Activated CD4-positive, alpha-beta memory T cell treated with anti-CD3 and anti-CD28 coated beads, Interleukin-2, amount 10 ng/mL, durations not matched to agents 7 days and 5 days (primary cell): ENCODE measurements at regions of chr6 and their contacts with region 1.

Region 1: DNA sequence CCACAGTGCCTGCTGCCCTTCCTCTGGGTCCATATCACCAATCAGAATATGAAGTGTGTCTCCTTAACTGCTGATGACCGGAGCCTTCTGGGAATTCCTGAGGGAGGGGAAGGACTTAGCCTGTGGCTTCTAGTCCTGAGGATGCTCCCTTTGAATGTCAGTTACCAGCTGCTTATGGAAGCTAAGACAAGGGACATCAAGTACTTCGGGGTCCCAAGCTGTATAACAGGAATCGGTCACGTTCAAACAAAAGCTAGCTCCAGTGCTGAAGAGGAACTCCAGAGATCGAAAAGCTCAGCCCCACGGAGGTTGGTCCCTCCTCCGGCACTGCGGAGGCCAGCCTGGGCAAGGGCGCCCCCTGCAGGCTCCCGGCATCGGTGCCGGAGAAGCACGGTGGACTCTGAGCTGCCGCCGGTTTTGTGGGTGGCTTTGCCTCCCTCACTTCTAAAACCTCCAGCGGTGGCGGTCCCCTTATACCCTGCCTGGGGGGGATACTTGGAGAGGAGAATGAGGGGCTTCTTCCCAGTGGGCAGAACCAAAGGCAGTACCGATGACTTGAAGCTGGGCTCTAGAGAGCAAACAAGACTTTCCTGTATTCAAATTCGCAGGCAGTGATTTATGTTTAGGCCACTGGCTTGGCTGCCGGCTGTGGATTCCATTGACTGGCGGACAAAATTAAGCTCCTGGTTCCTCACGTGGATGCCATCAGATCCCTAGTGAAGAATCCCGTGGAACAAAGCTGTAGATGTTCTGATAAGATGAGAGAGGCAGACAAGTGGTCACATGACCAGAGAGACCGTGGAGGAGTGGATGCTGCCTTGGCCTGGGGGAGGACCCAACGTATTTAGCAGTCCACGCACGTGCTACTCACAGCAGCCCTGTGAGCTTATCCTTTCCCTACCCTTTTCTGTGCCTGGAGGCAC is 16.2 kb upstream of the UBR2 start:
- DNase-seq: peak; percentile 88
- H3K4me3 Mint-ChIP-seq: peak overlapping the region; percentile 54
- H3K27ac Mint-ChIP-seq: peak overlapping the region; percentile 33
- H3K4me1 Mint-ChIP-seq: peaks cover 20% of the 10 kb centered on the region
- H3K27me3 Mint-ChIP-seq: peaks cover 4% of the 10 kb centered on the region

Region 2: DNA sequence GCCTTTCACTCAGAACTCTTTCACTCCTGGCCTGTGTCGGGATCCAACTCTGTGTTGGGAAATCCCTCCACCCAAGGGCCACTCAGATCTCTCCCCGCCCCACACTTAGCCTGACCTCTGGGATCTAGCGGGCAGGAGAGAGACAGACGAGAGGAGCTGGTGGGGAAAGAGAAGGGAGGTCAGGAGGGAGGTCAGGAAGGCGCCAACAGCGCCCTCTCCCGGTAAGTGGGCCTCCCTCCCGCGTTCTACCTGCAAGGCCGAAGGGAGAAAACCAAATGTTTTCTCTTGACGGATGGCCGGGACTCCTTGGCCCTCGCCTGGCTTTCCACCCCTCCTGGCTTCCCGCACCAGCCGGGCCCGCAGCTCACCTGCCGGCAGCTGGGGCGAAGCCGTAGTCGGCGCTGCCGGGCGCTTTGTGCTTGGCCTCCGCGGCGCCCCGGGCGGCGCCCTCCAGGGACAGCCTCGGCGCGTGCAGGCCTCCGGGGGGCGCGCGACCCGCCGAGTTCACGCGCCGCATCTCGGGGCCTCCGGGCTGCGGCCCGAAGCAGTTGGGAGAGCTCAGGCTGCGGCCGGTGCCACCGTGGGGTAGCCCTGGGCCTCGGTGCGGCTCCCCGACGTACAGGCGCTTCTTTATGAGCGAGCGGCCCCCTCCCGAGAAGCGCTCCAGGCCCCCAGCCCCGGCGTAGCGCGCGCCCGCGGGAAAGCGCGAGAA is 443.4 kb before region 1 on chr6:
- CTCF ChIA-PET with region 1: interaction called, 17 read pairs
- POLR2A ChIA-PET with region 1: no interaction called
- DNase-seq: peak; percentile 79
- H3K4me3 Mint-ChIP-seq: peak overlapping the region; percentile 67
- H3K27ac Mint-ChIP-seq: peak overlapping the region; percentile 57
- H3K4me1 Mint-ChIP-seq: peaks cover 42% of the 10 kb centered on the region
- H3K27me3 Mint-ChIP-seq: peaks cover 2% of the 10 kb centered on the region

Region 3: DNA sequence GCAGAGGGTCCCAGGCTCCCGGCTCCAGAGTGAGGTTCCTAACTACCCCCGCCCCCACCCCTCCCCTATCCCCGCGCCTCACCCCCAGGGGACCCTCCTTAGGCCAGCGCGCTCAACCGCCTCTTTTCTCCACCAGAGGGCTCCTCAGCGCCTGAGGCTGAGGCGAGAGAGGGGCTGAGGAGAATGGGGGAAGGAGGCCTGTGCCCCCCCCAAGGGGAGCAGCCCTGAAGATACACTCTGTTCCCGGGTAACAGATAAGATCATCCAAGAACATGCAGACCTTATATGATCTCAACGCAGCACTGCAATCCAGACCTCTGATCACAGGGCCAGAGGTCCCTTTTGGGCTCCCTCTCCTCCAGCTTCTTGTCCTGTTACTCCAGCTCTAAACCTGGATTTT is 286.7 kb before region 1 on chr6:
- CTCF ChIA-PET with region 1: interaction called, 78 read pairs
- POLR2A ChIA-PET with region 1: interaction called, 8 read pairs
- DNase-seq: peak; percentile 33
- H3K4me3 Mint-ChIP-seq: no peak overlapping the region
- H3K27ac Mint-ChIP-seq: no peak overlapping the region
- H3K4me1 Mint-ChIP-seq: peaks cover 5% of the 10 kb centered on the region
- H3K27me3 Mint-ChIP-seq: no peaks in the 10 kb centered on the region

Region 4: GRCh38 chr6:42338663-42339218 is 208.9 kb before region 1 on chr6:
- CTCF ChIA-PET with region 1: interaction called, 26 read pairs
- POLR2A ChIA-PET with region 1: no interaction called
- DNase-seq: no peak
- H3K4me3 Mint-ChIP-seq: no peak overlapping the region
- H3K27ac Mint-ChIP-seq: peak overlapping the region; percentile 21
- H3K4me1 Mint-ChIP-seq: peaks cover 71% of the 10 kb centered on the region
- H3K27me3 Mint-ChIP-seq: no peaks in the 10 kb centered on the region

Region 5: GRCh38 chr6:42423244-42423643 is 124.4 kb before region 1 on chr6:
- CTCF ChIA-PET with region 1: interaction called, 14 read pairs
- POLR2A ChIA-PET with region 1: no interaction called
- DNase-seq: peak; percentile 47
- H3K4me3 Mint-ChIP-seq: peak overlapping the region; percentile 43
- H3K27ac Mint-ChIP-seq: peak overlapping the region; percentile 50
- H3K4me1 Mint-ChIP-seq: peaks cover 58% of the 10 kb centered on the region
- H3K27me3 Mint-ChIP-seq: peaks cover 2% of the 10 kb centered on the region

Region 6: DNA sequence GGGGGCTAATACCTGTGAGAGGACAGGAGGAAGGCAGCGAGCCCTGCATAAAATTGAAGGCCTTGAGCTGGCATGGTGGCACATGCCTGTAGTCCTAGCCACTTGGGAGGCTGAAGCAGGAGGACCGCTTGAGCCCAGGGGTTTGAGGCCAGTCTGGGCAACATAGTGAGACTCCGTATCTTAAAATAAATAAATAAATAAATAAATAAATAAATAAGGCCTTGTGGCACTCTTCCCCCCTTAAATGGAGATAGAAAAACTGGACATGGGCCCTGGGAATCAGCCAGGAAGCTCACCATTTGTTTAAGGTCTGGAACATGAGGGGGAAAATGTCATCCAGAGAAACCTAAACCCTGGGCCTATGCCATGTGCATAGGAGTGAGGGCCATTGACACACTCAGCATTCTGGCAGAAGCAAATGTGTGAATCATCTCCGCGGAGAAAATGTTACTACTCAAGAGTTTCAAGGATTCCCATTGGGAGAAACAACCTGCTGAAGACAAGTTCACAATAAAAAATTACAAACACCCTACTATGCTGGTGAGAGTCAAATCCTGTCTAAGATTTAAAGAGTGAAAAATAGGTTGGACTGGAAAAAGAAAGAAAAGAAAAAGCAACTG is 35.8 kb before region 1 on chr6:
- CTCF ChIA-PET with region 1: interaction called, 18 read pairs
- POLR2A ChIA-PET with region 1: no interaction called
- DNase-seq: no peak
- H3K4me3 Mint-ChIP-seq: no peak overlapping the region
- H3K27ac Mint-ChIP-seq: no peak overlapping the region
- H3K4me1 Mint-ChIP-seq: no peaks in the 10 kb centered on the region
- H3K27me3 Mint-ChIP-seq: no peaks in the 10 kb centered on the region

Region 7: GRCh38 chr6:42572523-42572922 is 24.9 kb after region 1 on chr6:
- CTCF ChIA-PET with region 1: interaction called, 83 read pairs
- POLR2A ChIA-PET with region 1: no interaction called
- DNase-seq: no peak
- H3K4me3 Mint-ChIP-seq: no peak overlapping the region
- H3K27ac Mint-ChIP-seq: peak overlapping the region; percentile 36
- H3K4me1 Mint-ChIP-seq: peaks cover 45% of the 10 kb centered on the region
- H3K27me3 Mint-ChIP-seq: no peaks in the 10 kb centered on the region

Region 8: GRCh38 chr6:43045371-43045930 is 497.8 kb after region 1 on chr6:
- CTCF ChIA-PET with region 1: no interaction called
- POLR2A ChIA-PET with region 1: no interaction called
- DNase-seq: no peak
- H3K4me3 Mint-ChIP-seq: no peak overlapping the region
- H3K27ac Mint-ChIP-seq: no peak overlapping the region
- H3K4me1 Mint-ChIP-seq: peaks cover 3% of the 10 kb centered on the region
- H3K27me3 Mint-ChIP-seq: no peaks in the 10 kb centered on the region